Tibial artery (tissue), 4 donors: ENCODE measurements at regions of chr13 and their contacts with region 1.

Region 1: GRCh38 chr13:88107570-88107969 is 436.4 kb downstream of the SLITRK5 start:
- DNase-seq: no peak
- H3K4me3 ChIP-seq: no peak overlapping the region
- H3K27ac ChIP-seq: no peak overlapping the region
- H3K4me1 ChIP-seq: peaks cover 0 to 11% (median 0%) of the 10 kb centered on the region in 4 donors
- H3K27me3 ChIP-seq: no peaks in the 10 kb centered on the region
- CTCF ChIP-seq: no peak

Region 2: GRCh38 chr13:88124142-88124541 is 16.6 kb after region 1 on chr13:
- intact Hi-C with region 1: loop called (anchors 1 kb)
- DNase-seq: no peak
- H3K4me3 ChIP-seq: no peak overlapping the region
- H3K27ac ChIP-seq: no peak overlapping the region
- H3K4me1 ChIP-seq: no peaks in the 10 kb centered on the region
- H3K27me3 ChIP-seq: no peaks in the 10 kb centered on the region
- CTCF ChIP-seq: no peak